ENCODE measurements at regions of chr6 and their contacts with region 1.

Region 1: DNA sequence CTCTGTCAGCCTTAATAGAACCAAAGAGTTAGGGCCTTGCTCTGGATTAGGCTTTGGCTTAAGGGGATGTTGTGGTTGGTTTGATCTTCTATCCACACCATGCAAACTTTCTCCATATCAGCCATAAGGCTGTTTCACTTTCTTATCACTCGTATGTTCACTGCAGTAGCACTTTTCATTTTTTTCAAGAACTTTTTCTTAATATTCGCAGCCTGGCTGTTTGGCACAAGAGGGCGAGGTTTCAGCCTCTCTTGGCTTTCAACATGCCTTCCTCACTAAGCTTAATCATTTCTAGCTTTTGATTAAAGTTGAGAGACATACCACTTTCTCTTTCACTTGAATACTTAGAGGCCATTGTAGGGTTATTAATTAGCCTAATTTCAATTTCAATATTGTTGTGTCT is 193.1 kb downstream of the NRN1 start:
- DNase-seq: peak in 2 of 9 donors; percentile 13 to 29
- ATAC-seq: no peak
- H3K4me3 ChIP-seq: no peak overlapping the region
- H3K4me3 Mint-ChIP-seq: peak overlapping the region; percentile 1 to 65 (median 52)
- H3K27ac ChIP-seq: no peak overlapping the region
- H3K27ac Mint-ChIP-seq: peak overlapping the region; percentile 2 to 90 (median 71)
- H3K4me1 ChIP-seq: peaks cover 4 to 12% of the 10 kb centered on the region in 2 donors
- H3K4me1 Mint-ChIP-seq: peaks cover 18 to 39% (median 28%) of the 10 kb centered on the region in 7 donors
- H3K27me3 ChIP-seq: no peaks in the 10 kb centered on the region
- H3K27me3 Mint-ChIP-seq: peaks cover 0 to 3% (median 0%) of the 10 kb centered on the region in 5 donors

Region 2: GRCh38 chr6:5866547-5867101 is 53.0 kb after region 1 on chr6:
- CTCF ChIA-PET with region 1: no interaction called
- POLR2A ChIA-PET with region 1: no interaction called
- intact Hi-C with region 1: loop called in 1 of 2 experiments (anchors 5 kb)
- DNase-seq: peak in 6 of 9 donors; percentile 16 to 42 (median 32)
- ATAC-seq: peak; percentile 76
- H3K4me3 ChIP-seq: peak overlapping the region; percentile 36
- H3K4me3 Mint-ChIP-seq: peak overlapping the region; percentile 69 to 86 (median 80)
- H3K27ac ChIP-seq: peak overlapping the region; percentile 70
- H3K27ac Mint-ChIP-seq: peak overlapping the region; percentile 91 to 100 (median 98)
- H3K4me1 ChIP-seq: peaks cover 31 to 44% of the 10 kb centered on the region in 2 donors
- H3K4me1 Mint-ChIP-seq: peaks cover 30 to 66% (median 59%) of the 10 kb centered on the region in 7 donors
- H3K27me3 ChIP-seq: no peaks in the 10 kb centered on the region
- H3K27me3 Mint-ChIP-seq: no peaks in the 10 kb centered on the region

Region 3: GRCh38 chr6:5898559-5898958 is 84.9 kb after region 1 on chr6:
- CTCF ChIA-PET with region 1: no interaction called
- POLR2A ChIA-PET with region 1: interaction called, 3 read pairs
- intact Hi-C with region 1: loop called in 1 of 2 experiments (anchors 5 kb)
- DNase-seq: no peak
- ATAC-seq: no peak
- H3K4me3 ChIP-seq: no peak overlapping the region
- H3K4me3 Mint-ChIP-seq: no peak overlapping the region
- H3K27ac ChIP-seq: no peak overlapping the region
- H3K27ac Mint-ChIP-seq: peak overlapping the region in 1 of 9 donors; percentile 8
- H3K4me1 ChIP-seq: no peaks in the 10 kb centered on the region
- H3K4me1 Mint-ChIP-seq: peaks cover 0 to 9% (median 5%) of the 10 kb centered on the region in 7 donors
- H3K27me3 ChIP-seq: no peaks in the 10 kb centered on the region
- H3K27me3 Mint-ChIP-seq: peaks cover 0 to 4% (median 0%) of the 10 kb centered on the region in 5 donors

Region 4: DNA sequence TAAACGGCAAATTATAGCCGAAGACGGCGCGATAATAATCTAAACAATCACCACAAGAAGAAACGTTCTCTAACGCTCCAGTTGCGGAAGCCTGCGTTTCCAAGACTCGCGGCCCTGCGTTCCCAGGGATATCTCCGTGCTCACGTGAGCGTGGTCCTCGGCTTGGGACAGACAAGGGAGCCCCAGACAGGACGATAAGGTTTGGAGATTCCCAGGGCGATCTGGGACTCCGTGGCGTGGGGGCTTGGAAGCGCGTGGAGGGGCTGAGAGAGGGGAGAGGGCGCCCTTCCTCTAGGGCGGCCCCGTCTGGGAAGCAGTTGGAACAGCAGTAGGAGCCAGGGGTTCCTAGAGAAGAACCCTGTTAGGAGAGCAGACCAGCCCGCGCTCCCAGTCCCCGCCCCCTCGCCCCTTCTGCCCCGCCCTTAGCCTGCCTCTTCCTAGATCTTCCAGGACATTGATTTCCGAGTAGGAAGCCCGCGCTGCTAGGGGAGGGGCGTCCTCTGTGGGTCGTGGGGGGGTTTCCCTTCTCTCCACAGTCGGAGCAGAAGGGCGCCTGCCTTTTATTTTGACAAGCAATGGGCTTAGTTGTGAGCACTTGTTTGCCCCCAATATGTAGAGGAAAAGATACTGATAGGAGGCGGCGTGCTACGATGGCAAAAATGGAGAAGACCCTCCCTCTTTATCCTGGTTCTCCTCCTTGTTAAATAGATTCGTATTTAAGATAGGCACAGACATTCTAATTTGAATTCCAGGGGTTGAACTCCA is 182.5 kb after region 1 on chr6:
- CTCF ChIA-PET with region 1: interaction called, 3 read pairs
- POLR2A ChIA-PET with region 1: no interaction called
- intact Hi-C with region 1: loop called in 1 of 2 experiments (anchors 10 kb)
- DNase-seq: peak in 1 of 9 donors; percentile 29
- ATAC-seq: no peak
- H3K4me3 ChIP-seq: peak overlapping the region; percentile 84
- H3K4me3 Mint-ChIP-seq: peak overlapping the region; percentile 87 to 93 (median 90)
- H3K27ac ChIP-seq: no peak overlapping the region
- H3K27ac Mint-ChIP-seq: peak overlapping the region in 8 of 9 donors; percentile 15 to 86 (median 64)
- H3K4me1 ChIP-seq: peaks cover 27 to 53% of the 10 kb centered on the region in 2 donors
- H3K4me1 Mint-ChIP-seq: peaks cover 48 to 69% (median 58%) of the 10 kb centered on the region in 7 donors
- H3K27me3 ChIP-seq: peaks cover 44 to 80% of the 10 kb centered on the region in 2 donors
- H3K27me3 Mint-ChIP-seq: peaks cover 86 to 95% (median 93%) of the 10 kb centered on the region in 5 donors

Region 5: DNA sequence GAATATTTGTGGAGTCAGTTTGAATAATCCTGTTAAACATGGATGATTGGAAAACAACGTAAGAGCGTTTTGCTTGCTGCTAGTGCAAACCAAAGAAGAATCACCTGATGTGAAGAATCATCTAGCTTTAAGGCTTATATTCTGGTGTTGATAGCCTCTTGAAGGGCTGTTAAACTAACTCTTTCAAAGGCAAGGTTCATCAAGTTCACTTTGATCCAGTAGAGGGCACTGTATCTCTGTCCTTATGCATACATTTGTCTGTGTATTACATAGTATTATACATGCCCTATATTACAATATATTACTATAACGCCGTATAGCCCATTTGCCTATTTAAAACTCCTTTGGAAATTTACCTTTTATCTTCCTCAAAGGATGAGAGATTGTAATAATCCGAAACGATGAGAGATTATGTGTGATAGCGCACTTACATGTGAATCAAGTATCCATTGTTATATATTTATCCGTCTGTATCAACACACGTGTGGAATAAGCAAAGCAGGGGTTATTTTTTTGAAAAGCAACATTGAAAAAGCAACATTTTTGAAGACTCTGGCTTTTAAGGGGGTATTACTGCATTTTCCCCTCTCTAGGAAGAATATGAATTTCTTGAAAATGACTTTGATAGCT is 243.9 kb after region 1 on chr6:
- CTCF ChIA-PET with region 1: no interaction called
- POLR2A ChIA-PET with region 1: no interaction called
- intact Hi-C with region 1: loop called in 1 of 2 experiments (anchors 1 kb)
- DNase-seq: peak in 5 of 9 donors; percentile 14 to 40 (median 26)
- ATAC-seq: peak; percentile 63
- H3K4me3 ChIP-seq: no peak overlapping the region
- H3K4me3 Mint-ChIP-seq: no peak overlapping the region
- H3K27ac ChIP-seq: no peak overlapping the region
- H3K27ac Mint-ChIP-seq: no peak overlapping the region
- H3K4me1 ChIP-seq: no peaks in the 10 kb centered on the region
- H3K4me1 Mint-ChIP-seq: no peaks in the 10 kb centered on the region
- H3K27me3 ChIP-seq: peaks cover 0 to 3% of the 10 kb centered on the region in 2 donors
- H3K27me3 Mint-ChIP-seq: peaks cover 26 to 48% (median 32%) of the 10 kb centered on the region in 5 donors

Measured in naive thymus-derived CD4-positive, alpha-beta T cell (primary cell).